Activated CD4-positive, alpha-beta T cell treated with anti-CD3 and anti-CD28 coated beads for 36 hours (primary cell): ENCODE measurements at regions of chr12 and their contacts with region 1.

Region 1: DNA sequence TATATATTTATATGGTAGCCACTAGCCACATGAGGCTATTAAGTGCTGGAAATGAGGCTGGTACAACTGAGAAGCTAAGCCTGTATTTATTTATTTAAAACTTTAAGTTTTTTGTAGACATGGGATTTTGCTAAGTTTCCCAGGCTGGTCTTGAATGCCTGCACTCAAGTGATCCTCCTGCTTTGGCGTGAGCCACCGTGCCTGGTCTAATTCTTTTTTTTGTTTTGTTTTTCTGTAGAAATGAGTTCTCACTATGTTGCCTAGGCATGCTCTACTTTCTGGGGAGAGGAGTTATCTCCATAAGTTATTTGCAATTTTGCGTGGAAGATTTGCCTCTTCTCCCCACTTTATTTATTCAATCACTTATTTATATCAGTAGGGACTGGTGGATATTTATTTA is 4.8 kb upstream of the SNRNP35 start:
- DNase-seq: no peak
- ATAC-seq: no peak
- H3K4me3 Mint-ChIP-seq: no peak overlapping the region
- H3K27ac Mint-ChIP-seq: no peak overlapping the region
- H3K4me1 Mint-ChIP-seq: peaks cover 16% of the 10 kb centered on the region
- H3K27me3 Mint-ChIP-seq: no peaks in the 10 kb centered on the region

Region 2: GRCh38 chr12:123468562-123469185 is 15.5 kb after region 1 on chr12:
- CTCF ChIA-PET with region 1: interaction called, 4 read pairs
- POLR2A ChIA-PET with region 1: interaction called, 12 read pairs
- intact Hi-C with region 1: no loop called
- DNase-seq: no peak
- ATAC-seq: peak; percentile 42
- H3K4me3 Mint-ChIP-seq: no peak overlapping the region
- H3K27ac Mint-ChIP-seq: no peak overlapping the region
- H3K4me1 Mint-ChIP-seq: peaks cover 3% of the 10 kb centered on the region
- H3K27me3 Mint-ChIP-seq: no peaks in the 10 kb centered on the region

Region 3: GRCh38 chr12:123645878-123646277 is 192.7 kb after region 1 on chr12:
- CTCF ChIA-PET with region 1: no interaction called
- POLR2A ChIA-PET with region 1: no interaction called
- intact Hi-C with region 1: no loop called
- DNase-seq: no peak
- ATAC-seq: no peak
- H3K4me3 Mint-ChIP-seq: no peak overlapping the region
- H3K27ac Mint-ChIP-seq: no peak overlapping the region
- H3K4me1 Mint-ChIP-seq: no peaks in the 10 kb centered on the region
- H3K27me3 Mint-ChIP-seq: no peaks in the 10 kb centered on the region

Region 4: GRCh38 chr12:124248941-124249825 is 796.0 kb after region 1 on chr12:
- CTCF ChIA-PET with region 1: no interaction called
- POLR2A ChIA-PET with region 1: no interaction called
- intact Hi-C with region 1: no loop called
- DNase-seq: no peak
- ATAC-seq: no peak
- H3K4me3 Mint-ChIP-seq: no peak overlapping the region
- H3K27ac Mint-ChIP-seq: no peak overlapping the region
- H3K4me1 Mint-ChIP-seq: no peaks in the 10 kb centered on the region
- H3K27me3 Mint-ChIP-seq: peaks cover 6% of the 10 kb centered on the region